CD8-positive, alpha-beta T cell (primary cell): ENCODE measurements at regions of chr4 and their contacts with region 1.

Region 1: GRCh38 chr4:40056716-40057585 is at the start of gene N4BP2:
- DNase-seq: peak; percentile 46 to 89 (median 71)
- ATAC-seq: peak; percentile 65
- H3K4me3 ChIP-seq: peak within 1 kb of the TSS; percentile 76 to 92
- H3K4me3 Mint-ChIP-seq: peak within 1 kb of the TSS; percentile 94
- H3K27ac ChIP-seq: peak within 1 kb of the TSS; percentile 70 to 87
- H3K27ac Mint-ChIP-seq: peak within 1 kb of the TSS; percentile 94
- H3K4me1 ChIP-seq: peaks cover 21% of the 10 kb centered on the region
- H3K4me1 Mint-ChIP-seq: peaks cover 36% of the 10 kb centered on the region
- H3K27me3 ChIP-seq: no peaks in the 10 kb centered on the region
- H3K27me3 Mint-ChIP-seq: no peaks in the 10 kb centered on the region
- CTCF ChIP-seq: peak; percentile 79
- total RNA-seq, gene N4BP2: 19.5 to 20.4 TPM

Region 2: GRCh38 chr4:39118034-39118658 is 938.8 kb before region 1 on chr4:
- CTCF ChIA-PET with region 1: no interaction called
- POLR2A ChIA-PET with region 1: no interaction called
- intact Hi-C with region 1: no loop called
- DNase-seq: no peak
- ATAC-seq: no peak
- H3K4me3 ChIP-seq: no peak overlapping the region
- H3K4me3 Mint-ChIP-seq: peak overlapping the region; percentile 16
- H3K27ac ChIP-seq: peak overlapping the region in 1 of 2 experiments; percentile 16
- H3K27ac Mint-ChIP-seq: peak overlapping the region; percentile 73
- H3K4me1 ChIP-seq: no peaks in the 10 kb centered on the region
- H3K4me1 Mint-ChIP-seq: peaks cover 16% of the 10 kb centered on the region
- H3K27me3 ChIP-seq: no peaks in the 10 kb centered on the region
- H3K27me3 Mint-ChIP-seq: no peaks in the 10 kb centered on the region
- CTCF ChIP-seq: no peak

Region 3: GRCh38 chr4:39458505-39459300 is 598.2 kb before region 1 on chr4 and contains the starts of genes LIAS and RPL9:
- CTCF ChIA-PET with region 1: no interaction called
- POLR2A ChIA-PET with region 1: interaction called, 7 read pairs
- intact Hi-C with region 1: loop called in 1 of 2 experiments (anchors 2 kb)
- DNase-seq: peak; percentile 83 to 99 (median 94)
- ATAC-seq: peak; percentile 81
- H3K4me3 ChIP-seq: peak within 1 kb of the TSS; percentile 87 to 90
- H3K4me3 Mint-ChIP-seq: peak within 1 kb of the TSS; percentile 98
- H3K27ac ChIP-seq: peak within 1 kb of the TSS; percentile 91 to 97
- H3K27ac Mint-ChIP-seq: peak within 1 kb of the TSS; percentile 100
- H3K4me1 ChIP-seq: peaks cover 25% of the 10 kb centered on the region
- H3K4me1 Mint-ChIP-seq: peaks cover 42% of the 10 kb centered on the region
- H3K27me3 ChIP-seq: no peaks in the 10 kb centered on the region
- H3K27me3 Mint-ChIP-seq: no peaks in the 10 kb centered on the region
- CTCF ChIP-seq: no peak
- total RNA-seq, gene LIAS: 9.5 to 11.0 TPM
- total RNA-seq, gene RPL9: 2,977 to 3,433 TPM

Region 4: GRCh38 chr4:39697740-39698423 is 359.1 kb before region 1 on chr4 and contains the start of gene UBE2K:
- CTCF ChIA-PET with region 1: no interaction called
- POLR2A ChIA-PET with region 1: no interaction called
- intact Hi-C with region 1: loop called in 1 of 2 experiments (anchors 1 kb)
- DNase-seq: peak; percentile 73 to 95 (median 87)
- ATAC-seq: peak; percentile 82
- H3K4me3 ChIP-seq: peak within 1 kb of the TSS; percentile 97 to 100
- H3K4me3 Mint-ChIP-seq: peak within 1 kb of the TSS; percentile 99
- H3K27ac ChIP-seq: peak within 1 kb of the TSS; percentile 85 to 95
- H3K27ac Mint-ChIP-seq: peak within 1 kb of the TSS; percentile 99
- H3K4me1 ChIP-seq: peaks cover 39% of the 10 kb centered on the region
- H3K4me1 Mint-ChIP-seq: peaks cover 44% of the 10 kb centered on the region
- H3K27me3 ChIP-seq: no peaks in the 10 kb centered on the region
- H3K27me3 Mint-ChIP-seq: no peaks in the 10 kb centered on the region
- CTCF ChIP-seq: no peak
- total RNA-seq, gene UBE2K: 33.1 to 35.8 TPM

Region 5: GRCh38 chr4:39801975-39802374 is 255.0 kb before region 1 on chr4:
- CTCF ChIA-PET with region 1: no interaction called
- POLR2A ChIA-PET with region 1: no interaction called
- intact Hi-C with region 1: no loop called
- DNase-seq: no peak
- ATAC-seq: no peak
- H3K4me3 ChIP-seq: no peak overlapping the region
- H3K4me3 Mint-ChIP-seq: no peak overlapping the region
- H3K27ac ChIP-seq: no peak overlapping the region
- H3K27ac Mint-ChIP-seq: no peak overlapping the region
- H3K4me1 ChIP-seq: no peaks in the 10 kb centered on the region
- H3K4me1 Mint-ChIP-seq: no peaks in the 10 kb centered on the region
- H3K27me3 ChIP-seq: no peaks in the 10 kb centered on the region
- H3K27me3 Mint-ChIP-seq: no peaks in the 10 kb centered on the region
- CTCF ChIP-seq: no peak

Region 6: GRCh38 chr4:40099010-40099409 is 42.1 kb after region 1 on chr4:
- CTCF ChIA-PET with region 1: no interaction called
- POLR2A ChIA-PET with region 1: no interaction called
- intact Hi-C with region 1: no loop called
- DNase-seq: no peak
- ATAC-seq: no peak
- H3K4me3 ChIP-seq: no peak overlapping the region
- H3K4me3 Mint-ChIP-seq: no peak overlapping the region
- H3K27ac ChIP-seq: no peak overlapping the region
- H3K27ac Mint-ChIP-seq: no peak overlapping the region
- H3K4me1 ChIP-seq: no peaks in the 10 kb centered on the region
- H3K4me1 Mint-ChIP-seq: peaks cover 9% of the 10 kb centered on the region
- H3K27me3 ChIP-seq: no peaks in the 10 kb centered on the region
- H3K27me3 Mint-ChIP-seq: no peaks in the 10 kb centered on the region
- CTCF ChIP-seq: no peak

Region 7: GRCh38 chr4:40121515-40121914 is 64.6 kb after region 1 on chr4:
- CTCF ChIA-PET with region 1: no interaction called
- POLR2A ChIA-PET with region 1: no interaction called
- intact Hi-C with region 1: loop called (anchors 5 kb)
- DNase-seq: peak in 1 of 9 experiments; percentile 37
- ATAC-seq: no peak
- H3K4me3 ChIP-seq: no peak overlapping the region
- H3K4me3 Mint-ChIP-seq: no peak overlapping the region
- H3K27ac ChIP-seq: no peak overlapping the region
- H3K27ac Mint-ChIP-seq: peak overlapping the region; percentile 53
- H3K4me1 ChIP-seq: peaks cover 31% of the 10 kb centered on the region
- H3K4me1 Mint-ChIP-seq: peaks cover 43% of the 10 kb centered on the region
- H3K27me3 ChIP-seq: no peaks in the 10 kb centered on the region
- H3K27me3 Mint-ChIP-seq: no peaks in the 10 kb centered on the region
- CTCF ChIP-seq: no peak

Region 8: DNA sequence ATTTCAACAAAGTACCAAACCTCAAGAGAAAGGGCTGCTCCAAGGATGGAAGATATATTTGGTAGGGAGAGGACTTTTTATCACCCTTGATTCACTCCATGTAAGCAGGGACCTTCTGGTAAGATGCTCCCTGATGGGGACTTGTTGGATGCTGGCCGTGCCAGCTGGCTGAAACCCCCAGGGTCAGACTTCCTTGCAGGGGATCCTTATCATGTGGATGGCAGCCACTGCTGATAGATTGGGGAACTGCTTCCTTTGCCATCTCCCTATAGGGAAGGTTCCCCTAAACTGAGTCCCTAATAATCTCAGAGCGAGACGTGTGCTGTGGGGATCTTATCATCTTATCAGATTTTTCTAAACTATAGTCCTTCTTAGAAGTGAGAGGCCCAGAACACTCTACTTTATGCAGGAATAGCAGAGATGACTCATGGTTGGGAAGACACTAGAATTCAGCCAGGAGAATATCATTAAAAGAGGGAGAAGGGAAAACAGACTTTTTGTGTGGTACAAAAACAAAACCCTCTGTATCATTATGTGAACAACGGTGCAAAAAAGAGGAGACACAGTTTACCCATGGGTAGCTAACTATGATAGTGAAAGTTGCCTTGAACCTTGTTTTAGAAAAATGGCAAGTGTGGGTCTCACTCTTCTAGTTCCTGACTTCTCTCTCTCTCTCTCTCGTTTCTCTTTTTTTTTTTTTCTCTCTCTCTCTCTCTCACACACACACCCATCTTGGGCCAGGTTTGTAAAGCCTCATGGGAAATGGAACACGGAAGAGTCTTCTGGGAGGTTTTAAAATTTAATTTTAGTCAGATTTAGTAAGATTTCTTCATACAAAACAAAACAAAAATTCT is 155.9 kb after region 1 on chr4:
- CTCF ChIA-PET with region 1: interaction called, 3 read pairs
- POLR2A ChIA-PET with region 1: interaction called, 3 read pairs
- intact Hi-C with region 1: loop called in 1 of 2 experiments (anchors 5 kb)
- DNase-seq: peak in 1 of 9 experiments; percentile 59
- ATAC-seq: no peak
- H3K4me3 ChIP-seq: peak overlapping the region; percentile 5 to 31
- H3K4me3 Mint-ChIP-seq: peak overlapping the region; percentile 67
- H3K27ac ChIP-seq: peak overlapping the region; percentile 42 to 96
- H3K27ac Mint-ChIP-seq: peak overlapping the region; percentile 95
- H3K4me1 ChIP-seq: peaks cover 89% of the 10 kb centered on the region
- H3K4me1 Mint-ChIP-seq: peaks cover 93% of the 10 kb centered on the region
- H3K27me3 ChIP-seq: no peaks in the 10 kb centered on the region
- H3K27me3 Mint-ChIP-seq: no peaks in the 10 kb centered on the region
- CTCF ChIP-seq: no peak

Region 9: GRCh38 chr4:40255393-40256281 is 198.7 kb after region 1 on chr4:
- CTCF ChIA-PET with region 1: no interaction called
- POLR2A ChIA-PET with region 1: no interaction called
- intact Hi-C with region 1: loop called in 1 of 2 experiments (anchors 5 kb)
- DNase-seq: peak in 1 of 9 experiments; percentile 56
- ATAC-seq: peak; percentile 37
- H3K4me3 ChIP-seq: no peak overlapping the region
- H3K4me3 Mint-ChIP-seq: peak overlapping the region; percentile 43
- H3K27ac ChIP-seq: peak overlapping the region in 1 of 2 experiments; percentile 28
- H3K27ac Mint-ChIP-seq: peak overlapping the region; percentile 93
- H3K4me1 ChIP-seq: peaks cover 65% of the 10 kb centered on the region
- H3K4me1 Mint-ChIP-seq: peaks cover 73% of the 10 kb centered on the region
- H3K27me3 ChIP-seq: no peaks in the 10 kb centered on the region
- H3K27me3 Mint-ChIP-seq: no peaks in the 10 kb centered on the region
- CTCF ChIP-seq: no peak

Region 10: DNA sequence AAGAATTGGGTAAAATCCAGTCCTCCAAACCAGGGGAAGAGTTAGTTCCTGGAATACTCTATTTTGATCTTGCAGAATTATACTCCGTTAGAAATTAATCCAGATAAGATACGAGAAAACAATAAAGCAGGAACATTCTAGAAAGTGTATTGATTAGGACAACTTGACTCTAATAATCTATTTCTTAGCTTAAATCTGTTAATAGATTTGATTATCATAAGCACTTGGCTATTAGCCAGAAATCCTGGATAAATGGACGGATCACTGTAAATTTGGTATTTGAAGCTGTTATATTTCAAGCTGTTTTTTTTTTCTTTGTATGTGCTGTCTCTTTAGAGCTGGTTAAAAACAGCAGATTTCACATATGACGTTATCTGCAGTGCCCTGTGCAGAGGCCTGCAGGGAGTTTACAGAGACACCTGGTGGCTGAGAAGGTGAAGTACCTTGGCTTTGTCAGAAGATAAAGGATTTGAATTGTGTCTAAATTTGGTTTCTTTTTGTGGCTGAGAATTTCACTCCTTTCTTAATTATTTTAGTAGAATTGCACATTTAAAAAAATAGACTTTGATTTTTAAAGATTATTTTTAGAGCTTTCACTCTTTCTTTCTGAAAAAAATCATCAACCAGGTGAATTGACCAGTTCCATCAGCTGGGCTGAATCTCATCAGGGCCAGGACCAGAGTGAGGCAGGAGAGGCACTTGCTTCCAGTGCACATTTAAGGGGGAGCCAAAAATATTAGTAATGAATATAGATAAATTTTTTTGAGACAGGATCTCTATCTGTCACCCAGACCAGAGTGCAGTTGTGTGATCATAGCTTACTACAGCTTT is 268.5 kb after region 1 on chr4:
- CTCF ChIA-PET with region 1: interaction called, 59 read pairs
- POLR2A ChIA-PET with region 1: interaction called, 6 read pairs
- intact Hi-C with region 1: loop called (anchors 1 kb)
- DNase-seq: peak in 8 of 9 experiments; percentile 47 to 89 (median 69)
- ATAC-seq: peak; percentile 100
- H3K4me3 ChIP-seq: no peak overlapping the region
- H3K4me3 Mint-ChIP-seq: no peak overlapping the region
- H3K27ac ChIP-seq: no peak overlapping the region
- H3K27ac Mint-ChIP-seq: peak overlapping the region; percentile 3
- H3K4me1 ChIP-seq: peaks cover 11% of the 10 kb centered on the region
- H3K4me1 Mint-ChIP-seq: peaks cover 30% of the 10 kb centered on the region
- H3K27me3 ChIP-seq: no peaks in the 10 kb centered on the region
- H3K27me3 Mint-ChIP-seq: no peaks in the 10 kb centered on the region
- CTCF ChIP-seq: peak; percentile 99